ENCODE measurements at regions of chr7 and their contacts with region 1.

Region 1: GRCh38 chr7:149838224-149838947 is at the start of gene ZNF862:
- DNase-seq: peak; percentile 98 to 99 (median 99)
- ATAC-seq: peak; percentile 99 to 100 (median 99)
- H3K4me3 ChIP-seq: peak within 1 kb of the TSS; percentile 65 to 100 (median 90)
- H3K27ac ChIP-seq: peak within 1 kb of the TSS in 11 of 12 donors; percentile 79 to 96 (median 91)
- H3K4me1 ChIP-seq: peaks cover 0 to 17% (median 13%) of the 10 kb centered on the region in 12 donors
- H3K27me3 ChIP-seq: no peaks in the 10 kb centered on the region
- CTCF ChIP-seq: no peak
- POLR2A ChIP-seq: peak in 1 of 2 donors; percentile 95
- total RNA-seq, gene ZNF862: 8.0 to 18.1 (median 9.8) TPM

Region 2: DNA sequence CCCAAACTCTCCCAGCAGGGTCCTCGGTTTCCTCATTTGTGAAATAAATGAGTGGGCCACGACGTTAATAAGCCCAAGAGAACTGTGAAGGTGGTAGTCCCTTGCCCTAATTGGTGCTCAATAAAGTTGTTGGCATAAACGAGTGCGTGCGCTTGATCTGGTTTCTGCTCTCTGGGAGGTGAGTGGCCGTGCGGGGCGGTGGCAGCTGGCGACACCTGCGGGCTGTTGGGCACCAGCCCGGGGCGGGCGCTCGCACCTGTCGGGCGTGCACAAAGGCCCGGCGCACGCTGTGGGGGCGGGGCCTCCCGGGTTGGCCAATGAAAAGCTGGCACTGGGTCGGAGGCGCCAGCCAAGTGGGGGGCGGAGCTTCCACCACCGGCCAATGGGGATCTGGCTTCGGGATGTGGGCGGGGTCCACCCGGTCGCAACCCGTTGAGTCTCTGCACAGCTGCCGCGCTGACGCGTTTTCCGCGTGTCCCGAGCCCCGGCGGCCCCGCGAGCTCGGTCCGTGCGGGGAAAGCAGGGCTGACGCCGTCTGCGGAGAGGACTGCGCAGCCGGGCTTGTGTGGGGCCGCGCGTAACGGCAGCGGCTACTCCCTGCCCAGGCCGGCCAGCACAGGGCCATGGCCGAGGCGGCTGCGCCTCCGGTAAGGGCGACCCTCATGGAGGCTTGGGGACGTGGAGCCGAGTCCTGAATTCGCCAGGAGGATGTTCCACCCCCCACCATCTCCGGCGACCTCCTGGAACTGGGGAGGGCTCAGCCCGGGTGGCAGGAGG is 553.3 kb before region 1 on chr7:
- intact Hi-C with region 1: loop called in 1 of 10 experiments (anchors 10 kb)
- DNase-seq: peak; percentile 94 to 97 (median 96)
- ATAC-seq: peak; percentile 96 to 99 (median 98)
- H3K4me3 ChIP-seq: peak overlapping the region; percentile 42 to 90 (median 68)
- H3K27ac ChIP-seq: peak overlapping the region in 5 of 12 donors; percentile 25 to 63 (median 58)
- H3K4me1 ChIP-seq: peaks cover 0 to 19% (median 7%) of the 10 kb centered on the region in 12 donors
- H3K27me3 ChIP-seq: no peaks in the 10 kb centered on the region
- CTCF ChIP-seq: peak in 2 of 12 donors; percentile 3 to 10
- POLR2A ChIP-seq: peak in 1 of 2 donors; percentile 27

Region 3: DNA sequence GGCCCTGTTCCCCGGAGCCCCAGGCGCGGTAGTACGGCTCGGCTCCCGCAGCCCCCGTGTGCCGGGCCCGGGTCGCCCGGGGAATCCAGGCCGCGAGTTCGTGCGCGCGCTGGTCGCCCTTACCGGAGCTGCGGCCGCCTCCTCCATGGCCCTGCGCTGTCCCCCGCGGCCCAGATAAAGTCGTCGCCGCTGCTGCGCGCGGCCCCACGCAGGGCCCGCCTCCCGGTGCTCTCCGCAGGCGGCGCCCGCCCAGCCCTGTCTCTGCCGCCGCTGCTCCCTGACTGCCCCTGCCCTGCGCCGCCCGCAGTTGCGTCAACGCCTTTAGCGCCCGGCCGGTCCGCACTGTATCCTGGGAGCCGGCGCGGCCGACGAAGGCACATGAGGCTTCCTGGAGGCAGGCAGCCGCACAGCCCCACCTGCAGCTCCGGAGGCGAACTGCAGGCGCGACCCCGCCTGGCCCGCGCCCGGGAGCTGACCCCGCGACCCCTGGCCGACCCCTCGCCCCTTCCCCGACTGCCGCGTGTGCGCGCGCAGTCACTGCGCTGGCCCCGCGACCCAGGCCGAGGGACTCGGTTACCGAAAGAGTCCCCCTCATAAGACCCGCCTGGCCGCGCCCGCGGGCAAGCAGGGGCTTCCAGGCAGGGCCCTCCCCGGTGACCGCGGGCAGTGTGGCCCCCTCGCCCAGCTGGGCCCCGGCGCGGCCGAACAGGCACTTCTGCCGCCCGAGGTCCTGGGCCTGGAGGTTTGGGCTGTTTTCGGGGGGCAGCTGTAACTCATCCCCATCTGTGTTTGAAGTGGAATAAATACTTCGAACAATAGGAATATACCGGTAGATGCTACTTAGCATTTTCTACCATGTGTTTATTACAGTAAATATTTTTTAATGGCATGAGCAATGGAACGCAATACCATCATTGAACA is 213.7 kb before region 1 on chr7:
- intact Hi-C with region 1: loop called in 1 of 10 experiments (anchors 5 kb)
- DNase-seq: peak; percentile 93 to 98 (median 96)
- ATAC-seq: peak; percentile 96 to 98 (median 98)
- H3K4me3 ChIP-seq: peak overlapping the region; percentile 79 to 100 (median 97)
- H3K27ac ChIP-seq: peak overlapping the region; percentile 81 to 91 (median 89)
- H3K4me1 ChIP-seq: peaks cover 0 to 30% (median 21%) of the 10 kb centered on the region in 12 donors
- H3K27me3 ChIP-seq: no peaks in the 10 kb centered on the region
- CTCF ChIP-seq: peak in 11 of 12 donors; percentile 94 to 100 (median 99)
- POLR2A ChIP-seq: peak in 1 of 2 donors; percentile 73

Region 4: GRCh38 chr7:149714050-149714909 is 124.1 kb before region 1 on chr7:
- intact Hi-C with region 1: loop called in 1 of 10 experiments (anchors 10 kb)
- DNase-seq: peak; percentile 92 to 97 (median 93)
- ATAC-seq: peak; percentile 71 to 90 (median 88)
- H3K4me3 ChIP-seq: peak overlapping the region; percentile 54 to 94 (median 78)
- H3K27ac ChIP-seq: peak overlapping the region in 11 of 12 donors; percentile 72 to 94 (median 86)
- H3K4me1 ChIP-seq: peaks cover 4 to 49% (median 24%) of the 10 kb centered on the region in 12 donors
- H3K27me3 ChIP-seq: no peaks in the 10 kb centered on the region
- CTCF ChIP-seq: peak in 1 of 12 donors; percentile 10
- POLR2A ChIP-seq: no peak

Region 5: GRCh38 chr7:149771721-149772240 is 66.6 kb before region 1 on chr7:
- intact Hi-C with region 1: loop called in 4 of 10 experiments (anchors 2 to 10 kb)
- DNase-seq: peak; percentile 93 to 96 (median 93)
- ATAC-seq: peak; percentile 87 to 95 (median 92)
- H3K4me3 ChIP-seq: peak overlapping the region in 11 of 12 donors; percentile 57 to 89 (median 65)
- H3K27ac ChIP-seq: peak overlapping the region in 10 of 12 donors; percentile 16 to 86 (median 72)
- H3K4me1 ChIP-seq: peaks cover 0 to 46% (median 25%) of the 10 kb centered on the region in 12 donors
- H3K27me3 ChIP-seq: peaks cover 0 to 13% (median 1%) of the 10 kb centered on the region in 9 donors
- CTCF ChIP-seq: no peak
- POLR2A ChIP-seq: peak in 1 of 2 donors; percentile 30

Region 6: GRCh38 chr7:149873074-149873969 is 34.9 kb after region 1 on chr7 and contains the start of gene ATP6V0E2:
- intact Hi-C with region 1: loop called in 4 of 10 experiments (anchors 2 to 5 kb)
- DNase-seq: peak; percentile 96 to 98 (median 97)
- ATAC-seq: peak; percentile 88 to 96 (median 95)
- H3K4me3 ChIP-seq: peak within 1 kb of the TSS; percentile 66 to 93 (median 80)
- H3K27ac ChIP-seq: peak within 1 kb of the TSS; percentile 79 to 97 (median 93)
- H3K4me1 ChIP-seq: peaks cover 0 to 41% (median 23%) of the 10 kb centered on the region in 12 donors
- H3K27me3 ChIP-seq: no peaks in the 10 kb centered on the region
- CTCF ChIP-seq: no peak
- POLR2A ChIP-seq: peak; percentile 58 to 73
- total RNA-seq, gene ATP6V0E2: 55.4 to 137 (median 92.3) TPM